MCF 10A (cell line): ENCODE measurements at regions of chr6 and their contacts with region 1.

Region 1: DNA sequence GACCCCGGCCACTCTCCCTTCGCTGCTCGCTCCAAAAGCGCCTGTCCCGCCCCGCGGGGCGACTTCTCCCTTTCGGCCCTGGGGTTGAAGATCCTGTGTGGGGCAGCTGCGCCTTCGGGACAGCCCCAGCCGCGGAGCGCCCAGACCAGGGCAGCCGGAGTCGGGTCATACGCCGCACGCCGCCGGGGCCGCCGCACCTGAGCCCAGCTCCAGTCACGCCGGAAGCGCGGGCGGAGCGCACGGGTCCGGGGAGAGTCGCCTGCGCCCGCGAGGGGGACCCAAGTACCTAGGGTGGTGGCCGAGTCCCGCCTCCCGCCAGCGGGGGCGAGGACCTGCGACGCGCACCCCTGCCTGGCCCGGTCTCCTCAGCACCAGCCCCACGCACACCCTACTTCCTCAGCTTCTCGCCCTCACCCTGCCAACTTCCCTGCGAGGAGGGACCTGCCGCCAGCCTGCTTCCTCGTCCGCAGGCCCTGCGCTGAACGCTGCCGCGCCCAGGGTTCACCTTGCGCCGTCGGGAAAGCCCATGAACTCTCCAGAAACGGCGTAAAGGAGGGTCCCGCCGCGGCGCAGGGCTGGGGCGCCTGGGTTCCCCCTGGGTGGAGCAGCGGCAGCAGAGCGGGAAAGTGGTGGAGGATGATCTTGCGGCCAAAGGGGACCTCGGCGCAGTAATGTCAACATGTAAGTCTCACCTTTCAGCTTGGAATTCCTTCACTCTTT is at the start of gene ADGRG6:
- DNase-seq: peak; percentile 66
- H3K4me3 Mint-ChIP-seq: peak within 1 kb of the TSS; percentile 87
- H3K27ac Mint-ChIP-seq: peak within 1 kb of the TSS; percentile 69
- H3K4me1 Mint-ChIP-seq: peaks cover 35% of the 10 kb centered on the region
- H3K27me3 Mint-ChIP-seq: no peaks in the 10 kb centered on the region
- CTCF ChIP-seq: no peak
- total RNA-seq, gene ADGRG6: 28.8 and 44.2 TPM in 2 replicates

Region 2: GRCh38 chr6:142146828-142147662 is 154.8 kb before region 1 on chr6 and contains the starts of genes NMBR and VTA1:
- CTCF ChIA-PET with region 1: interaction called, 3 read pairs
- POLR2A ChIA-PET with region 1: interaction called, 7 read pairs
- intact Hi-C with region 1: loop called (anchors 2 kb)
- DNase-seq: peak; percentile 98
- H3K4me3 Mint-ChIP-seq: peak within 1 kb of the TSS; percentile 97
- H3K27ac Mint-ChIP-seq: peak within 1 kb of the TSS; percentile 92
- H3K4me1 Mint-ChIP-seq: peaks cover 36% of the 10 kb centered on the region
- H3K27me3 Mint-ChIP-seq: no peaks in the 10 kb centered on the region
- CTCF ChIP-seq: peak; percentile 87
- total RNA-seq, gene NMBR: not detected in 2 replicates
- total RNA-seq, gene VTA1: 42.9 and 43.5 TPM in 2 replicates

Region 3: GRCh38 chr6:142313284-142313683 is 11.5 kb after region 1 on chr6:
- CTCF ChIA-PET with region 1: interaction called, 3 read pairs
- POLR2A ChIA-PET with region 1: interaction called, 48 read pairs
- intact Hi-C with region 1: no loop called
- DNase-seq: peak; percentile 61
- H3K4me3 Mint-ChIP-seq: peak overlapping the region; percentile 15
- H3K27ac Mint-ChIP-seq: peak overlapping the region; percentile 57
- H3K4me1 Mint-ChIP-seq: peaks cover 11% of the 10 kb centered on the region
- H3K27me3 Mint-ChIP-seq: no peaks in the 10 kb centered on the region
- CTCF ChIP-seq: no peak

Region 4: DNA sequence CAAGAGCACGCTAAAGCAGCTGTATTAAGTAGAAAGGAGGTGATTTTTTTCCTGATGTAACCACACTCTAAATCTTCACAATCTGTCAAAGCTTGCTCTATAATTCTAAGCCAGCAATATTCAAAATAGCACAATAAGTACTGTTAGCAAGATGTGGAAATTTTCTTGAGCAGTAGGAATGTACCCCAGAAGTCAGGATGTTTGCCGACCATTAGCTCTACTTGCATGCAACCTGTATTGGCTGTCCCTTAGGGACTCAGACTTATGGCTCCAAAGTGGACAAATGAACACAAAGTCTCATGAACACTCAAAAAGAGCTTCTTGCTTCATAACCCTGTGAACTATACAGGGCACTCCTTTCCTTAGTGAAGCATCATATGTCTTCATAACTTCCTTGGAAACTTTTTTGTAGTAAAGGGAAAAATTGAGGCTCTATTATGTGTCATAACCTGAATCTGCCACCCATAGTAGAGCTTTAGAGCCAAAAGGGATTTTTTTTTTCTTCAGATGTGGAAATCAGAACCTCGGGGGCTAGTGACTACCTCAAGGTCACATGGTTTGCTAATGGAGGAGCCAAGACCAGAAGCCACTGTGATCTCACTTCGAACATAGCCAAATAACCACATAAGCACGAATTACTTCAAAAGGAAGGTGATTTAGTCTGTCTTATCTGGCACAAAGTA is 54.5 kb after region 1 on chr6:
- CTCF ChIA-PET with region 1: no interaction called
- POLR2A ChIA-PET with region 1: interaction called, 24 read pairs
- intact Hi-C with region 1: no loop called
- DNase-seq: peak; percentile 87
- H3K4me3 Mint-ChIP-seq: peak overlapping the region; percentile 30
- H3K27ac Mint-ChIP-seq: peak overlapping the region; percentile 73
- H3K4me1 Mint-ChIP-seq: peaks cover 25% of the 10 kb centered on the region
- H3K27me3 Mint-ChIP-seq: no peaks in the 10 kb centered on the region
- CTCF ChIP-seq: no peak

Region 5: DNA sequence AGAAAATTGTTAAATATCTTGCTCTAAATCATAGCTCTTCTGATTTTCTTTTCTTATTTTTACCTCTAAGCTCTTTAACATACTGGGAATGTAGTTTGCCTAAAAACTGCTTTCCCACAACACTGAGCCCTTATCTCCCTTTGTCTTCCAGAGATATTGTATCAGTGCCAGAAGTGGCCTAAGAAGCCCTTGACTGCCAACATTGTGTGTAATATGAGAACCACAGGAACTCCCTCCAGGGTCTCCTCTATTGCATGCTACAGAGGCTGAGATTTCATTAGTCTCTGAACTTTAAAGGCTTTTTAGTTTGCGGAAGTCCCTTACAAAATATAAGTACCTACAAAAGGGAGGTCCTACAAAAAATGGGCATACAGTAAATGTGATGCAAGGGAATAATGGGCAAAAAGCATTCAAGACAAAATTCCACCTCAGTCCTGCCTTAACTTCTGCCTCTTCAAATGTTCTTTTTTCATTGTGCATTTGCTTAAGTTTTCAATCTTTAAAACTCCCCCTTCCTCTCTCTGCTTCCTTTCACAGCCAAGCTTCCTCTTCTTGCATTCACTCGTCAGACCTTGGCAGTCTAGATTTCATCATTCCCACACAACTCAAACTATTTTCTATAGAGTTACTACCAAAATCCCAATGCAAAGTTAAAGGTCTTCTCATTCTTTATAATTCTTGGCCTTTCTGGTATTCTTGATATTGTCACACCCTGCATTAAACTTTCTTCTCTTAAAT is 76.5 kb after region 1 on chr6:
- CTCF ChIA-PET with region 1: interaction called, 8 read pairs
- POLR2A ChIA-PET with region 1: interaction called, 102 read pairs
- intact Hi-C with region 1: loop called (anchors 1 kb)
- DNase-seq: peak; percentile 93
- H3K4me3 Mint-ChIP-seq: no peak overlapping the region
- H3K27ac Mint-ChIP-seq: peak overlapping the region; percentile 68
- H3K4me1 Mint-ChIP-seq: peaks cover 39% of the 10 kb centered on the region
- H3K27me3 Mint-ChIP-seq: no peaks in the 10 kb centered on the region
- CTCF ChIP-seq: no peak